Left cardiac atrium (tissue), 4 donors: ENCODE measurements at regions of chr6 and their contacts with region 1.

Region 1: DNA sequence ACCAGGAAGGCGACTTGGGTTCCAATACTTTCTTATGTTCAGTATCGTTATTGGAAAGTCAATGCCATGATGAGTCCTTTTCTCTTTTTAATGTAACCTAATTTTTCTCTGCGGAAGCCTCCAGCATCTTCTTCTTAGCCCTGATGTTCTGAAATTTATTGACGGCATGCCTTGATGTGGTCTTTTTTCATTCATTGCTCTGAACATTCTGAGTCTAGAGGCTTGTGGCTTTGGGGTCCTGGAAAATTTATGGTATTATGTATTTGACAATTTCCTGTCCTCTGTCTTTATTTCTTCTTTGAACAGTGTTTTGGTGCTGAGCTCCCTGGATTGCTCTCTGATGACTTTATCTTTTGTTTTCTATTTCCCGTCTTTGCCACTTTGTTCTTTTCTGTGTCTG is 28.7 kb upstream of the MAS1 start:
- DNase-seq: no peak
- ATAC-seq: no peak

Region 2: GRCh38 chr6:159929819-159930218 is 67.7 kb after region 1 on chr6:
- intact Hi-C with region 1: loop called in 1 of 2 experiments (anchors 10 kb)
- DNase-seq: no peak
- ATAC-seq: no peak

Region 3: DNA sequence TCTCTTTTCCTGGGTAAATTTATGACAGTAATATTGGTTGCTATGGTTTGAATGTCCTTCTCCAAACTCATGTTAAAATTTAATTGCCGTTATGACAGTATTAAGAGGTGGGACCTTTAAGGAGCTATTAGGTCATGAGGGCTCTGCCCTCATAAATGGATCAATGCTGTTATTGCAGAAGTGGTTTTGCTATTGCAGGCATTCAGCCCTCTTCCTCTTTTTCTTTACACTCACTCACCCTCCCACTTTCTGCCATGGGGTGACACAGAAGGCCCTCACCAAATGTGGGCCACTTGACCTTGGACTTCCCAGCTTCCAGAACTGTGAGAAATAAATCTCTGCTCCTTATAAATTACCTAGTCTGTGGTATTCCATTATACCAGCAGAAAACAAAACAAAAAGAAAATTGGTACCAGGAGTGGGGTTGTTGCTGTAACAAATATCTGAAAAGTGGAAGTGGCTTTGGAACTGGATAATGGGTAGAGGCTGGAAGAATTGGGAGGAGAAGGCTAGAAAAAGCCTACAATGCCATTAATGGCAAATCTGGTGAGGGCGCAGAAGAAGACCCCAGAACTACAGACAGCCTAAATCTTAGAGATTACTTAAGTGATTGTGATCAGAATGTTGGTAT is 82.0 kb after region 1 on chr6:
- intact Hi-C with region 1: loop called (anchors 2 to 10 kb)
- DNase-seq: no peak
- ATAC-seq: no peak

Region 4: DNA sequence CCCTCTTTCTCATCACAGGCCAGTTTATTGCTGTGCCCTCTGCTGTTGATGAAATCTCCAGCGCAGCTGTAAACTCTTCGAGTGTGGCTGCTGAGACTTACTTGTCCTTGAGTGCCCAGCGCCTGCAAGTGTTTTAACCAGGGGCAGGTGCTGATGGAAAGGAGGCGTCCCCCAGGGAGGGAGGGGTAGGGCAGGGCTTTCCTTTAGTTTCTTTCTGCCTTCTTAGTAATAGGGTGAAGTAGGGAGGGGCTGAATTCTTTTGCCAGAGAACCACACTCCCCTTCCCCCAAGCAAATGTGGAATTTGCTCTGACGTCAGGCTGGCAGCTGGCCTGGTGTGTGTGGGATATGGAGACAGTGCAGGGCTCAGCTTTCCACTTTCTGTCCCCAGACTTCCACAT is 168.0 kb after region 1 on chr6:
- intact Hi-C with region 1: loop called (anchors 5 to 10 kb)
- DNase-seq: peak; percentile 91
- ATAC-seq: peak; percentile 96 to 98

Region 5: GRCh38 chr6:160088069-160088783 is 226.1 kb after region 1 on chr6:
- intact Hi-C with region 1: loop called in 1 of 2 experiments (anchors 10 kb)
- DNase-seq: peak; percentile 64
- ATAC-seq: peak; percentile 72 to 78

Region 6: DNA sequence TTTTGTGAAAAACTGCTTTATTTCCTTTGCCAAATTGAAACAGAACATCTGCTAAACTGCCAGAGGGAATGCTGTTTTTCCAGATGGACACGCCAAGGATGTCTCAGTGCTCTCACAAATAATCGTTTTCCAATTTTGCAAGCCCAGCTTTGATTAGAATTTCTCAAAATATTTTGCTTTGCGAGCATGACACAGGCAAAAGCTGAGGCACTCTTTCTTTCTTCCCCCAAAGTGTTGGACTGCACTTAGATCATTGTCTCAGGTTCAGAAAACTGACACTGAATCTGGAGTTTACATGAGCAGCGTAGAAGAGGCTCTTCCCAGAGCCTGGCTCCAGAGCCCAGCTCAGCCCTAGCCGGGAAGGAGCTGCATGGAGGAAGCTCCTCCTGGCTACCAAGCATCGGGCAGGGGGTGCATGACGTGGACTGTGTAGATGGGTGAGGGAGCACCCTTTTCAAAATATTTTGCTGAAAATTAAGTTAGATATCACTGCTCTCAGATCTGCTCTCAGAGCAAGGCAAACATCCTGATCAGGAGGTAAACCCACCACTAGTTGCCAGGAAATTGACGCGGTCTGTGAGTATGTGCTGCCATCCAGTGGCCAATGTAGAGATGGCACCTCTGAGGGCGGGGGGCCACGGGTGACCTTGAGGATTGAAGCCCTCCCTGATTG is 593.6 kb after region 1 on chr6:
- intact Hi-C with region 1: loop called (anchors 2 to 10 kb)
- DNase-seq: peak; percentile 50
- ATAC-seq: peak; percentile 86 to 87